ENCODE measurements at regions of chr12 and their contacts with region 1.

Region 1: GRCh38 chr12:95102916-95103671 is 29.7 kb upstream of the NR2C1 start:
- DNase-seq: peak; percentile 68
- H3K4me3 Mint-ChIP-seq: no peak overlapping the region
- H3K27ac Mint-ChIP-seq: peak overlapping the region; percentile 63
- H3K4me1 Mint-ChIP-seq: peaks cover 19% of the 10 kb centered on the region
- H3K27me3 Mint-ChIP-seq: no peaks in the 10 kb centered on the region

Region 2: GRCh38 chr12:94621664-94622359 is 481.3 kb before region 1 on chr12:
- CTCF ChIA-PET with region 1: no interaction called
- POLR2A ChIA-PET with region 1: no interaction called
- intact Hi-C with region 1: loop called (anchors 5 kb)
- DNase-seq: peak; percentile 67
- H3K4me3 Mint-ChIP-seq: peak overlapping the region; percentile 23
- H3K27ac Mint-ChIP-seq: peak overlapping the region; percentile 56
- H3K4me1 Mint-ChIP-seq: peaks cover 22% of the 10 kb centered on the region
- H3K27me3 Mint-ChIP-seq: no peaks in the 10 kb centered on the region

Region 3: GRCh38 chr12:94941440-94941862 is 161.6 kb before region 1 on chr12:
- CTCF ChIA-PET with region 1: no interaction called
- POLR2A ChIA-PET with region 1: no interaction called
- intact Hi-C with region 1: loop called (anchors 1 kb)
- DNase-seq: peak; percentile 82
- H3K4me3 Mint-ChIP-seq: no peak overlapping the region
- H3K27ac Mint-ChIP-seq: peak overlapping the region; percentile 63
- H3K4me1 Mint-ChIP-seq: peaks cover 39% of the 10 kb centered on the region
- H3K27me3 Mint-ChIP-seq: peaks cover 2% of the 10 kb centered on the region

Region 4: GRCh38 chr12:95072900-95073697 is 30.0 kb before region 1 on chr12 and contains the start of gene NR2C1:
- CTCF ChIA-PET with region 1: interaction called, 16 read pairs
- POLR2A ChIA-PET with region 1: interaction called, 4 read pairs
- intact Hi-C with region 1: loop called (anchors 1 kb)
- DNase-seq: peak; percentile 96
- H3K4me3 Mint-ChIP-seq: peak within 1 kb of the TSS; percentile 89
- H3K27ac Mint-ChIP-seq: peak within 1 kb of the TSS; percentile 89
- H3K4me1 Mint-ChIP-seq: peaks cover 20% of the 10 kb centered on the region
- H3K27me3 Mint-ChIP-seq: no peaks in the 10 kb centered on the region
- total RNA-seq, gene NR2C1: 25.5 to 27.1 TPM

Region 5: DNA sequence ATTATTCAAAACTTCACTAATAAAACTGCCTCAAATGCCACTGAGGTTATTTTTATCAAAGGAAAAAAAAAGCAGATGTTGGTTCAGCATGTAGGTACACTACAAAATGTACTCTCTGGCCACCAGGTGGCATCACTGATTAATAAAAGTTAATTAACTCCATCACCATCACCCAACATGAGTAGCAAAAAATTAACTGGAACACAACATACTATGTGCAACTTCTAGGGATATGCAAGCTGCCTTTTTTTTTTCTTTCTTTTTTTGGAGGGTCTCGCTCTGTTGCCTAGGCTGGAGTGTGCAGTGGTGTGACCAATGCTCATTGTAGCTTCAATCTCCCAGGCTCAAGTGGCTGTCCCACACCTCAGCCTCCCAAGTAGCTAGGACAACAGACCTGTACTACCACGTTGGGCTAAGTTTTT is 14.1 kb after region 1 on chr12:
- CTCF ChIA-PET with region 1: interaction called, 4 read pairs
- POLR2A ChIA-PET with region 1: no interaction called
- intact Hi-C with region 1: loop called (anchors 1 kb)
- DNase-seq: peak; percentile 53
- H3K4me3 Mint-ChIP-seq: no peak overlapping the region
- H3K27ac Mint-ChIP-seq: no peak overlapping the region
- H3K4me1 Mint-ChIP-seq: peaks cover 5% of the 10 kb centered on the region
- H3K27me3 Mint-ChIP-seq: no peaks in the 10 kb centered on the region

Measured in activated CD4-positive, alpha-beta memory T cell treated with anti-CD3 and anti-CD28 coated beads for 36 hours (primary cell).